CD8-positive, alpha-beta T cell (primary cell): ENCODE measurements at regions of chr2 and their contacts with region 1.

Region 1: DNA sequence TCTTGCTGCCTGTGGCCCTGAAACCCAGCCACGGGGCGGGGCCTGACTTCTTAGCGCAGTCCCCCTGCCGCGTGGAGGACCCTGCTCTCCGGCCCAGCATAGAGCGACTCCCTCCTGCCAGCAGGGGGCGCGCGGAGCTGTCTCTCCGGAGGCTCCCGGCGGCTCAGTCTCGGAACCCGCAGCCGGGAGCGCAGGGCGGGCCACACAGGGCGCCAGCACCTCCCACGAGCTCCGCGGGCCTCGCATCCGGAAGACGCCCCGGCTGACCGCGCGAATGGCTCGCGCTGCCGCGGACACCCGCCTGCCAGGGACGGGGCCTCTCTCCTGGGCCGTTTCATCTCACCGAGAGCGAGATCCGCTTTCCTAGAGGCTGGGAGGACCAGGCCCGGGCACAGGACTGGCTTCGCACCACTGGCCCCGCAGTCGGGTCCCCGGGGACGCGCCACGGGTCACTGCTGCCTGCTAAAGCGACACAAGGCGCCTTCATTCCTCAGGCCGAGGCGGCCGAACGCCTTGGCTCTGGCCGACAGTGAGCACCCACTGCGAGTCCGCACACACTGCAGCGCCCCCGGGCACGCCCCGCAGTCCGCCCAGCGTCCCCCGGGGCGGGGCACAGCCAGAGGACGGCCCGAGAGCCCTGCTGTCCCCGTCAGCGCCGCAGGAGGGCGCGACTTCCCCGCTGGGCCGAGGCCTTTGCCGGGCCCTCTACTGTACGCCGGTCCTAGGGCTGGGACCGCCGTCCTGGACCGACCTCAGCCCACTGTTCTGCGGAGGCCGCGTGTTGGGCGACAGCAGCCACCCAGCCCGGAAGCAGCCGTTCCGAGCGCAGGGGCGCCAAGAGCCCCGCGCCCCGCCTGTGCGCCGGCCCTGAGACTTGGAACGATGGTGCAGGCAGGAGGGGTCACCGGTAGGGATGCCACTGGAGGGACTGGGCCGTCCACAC is 39.0 kb upstream of the ARHGEF4 start:
- DNase-seq: peak; percentile 77 to 96 (median 92)
- ATAC-seq: peak; percentile 89
- H3K4me3 ChIP-seq: peak overlapping the region; percentile 69 to 96
- H3K4me3 Mint-ChIP-seq: peak overlapping the region; percentile 75
- H3K27ac ChIP-seq: peak overlapping the region; percentile 64 to 88
- H3K27ac Mint-ChIP-seq: peak overlapping the region; percentile 64
- H3K4me1 ChIP-seq: peaks cover 10% of the 10 kb centered on the region
- H3K4me1 Mint-ChIP-seq: peaks cover 6% of the 10 kb centered on the region
- H3K27me3 ChIP-seq: no peaks in the 10 kb centered on the region
- H3K27me3 Mint-ChIP-seq: peaks cover 2% of the 10 kb centered on the region
- CTCF ChIP-seq: peak; percentile 67

Region 2: GRCh38 chr2:130181325-130181879 is 616.4 kb before region 1 on chr2 and contains the start of gene SMPD4:
- CTCF ChIA-PET with region 1: no interaction called
- POLR2A ChIA-PET with region 1: no interaction called
- intact Hi-C with region 1: loop called in 1 of 2 experiments (anchors 5 kb)
- DNase-seq: peak; percentile 96 to 99 (median 98)
- ATAC-seq: peak; percentile 78
- H3K4me3 ChIP-seq: peak within 1 kb of the TSS; percentile 63 to 86
- H3K4me3 Mint-ChIP-seq: peak within 1 kb of the TSS; percentile 92
- H3K27ac ChIP-seq: peak within 1 kb of the TSS; percentile 81 to 89
- H3K27ac Mint-ChIP-seq: peak within 1 kb of the TSS; percentile 95
- H3K4me1 ChIP-seq: peaks cover 22% of the 10 kb centered on the region
- H3K4me1 Mint-ChIP-seq: peaks cover 27% of the 10 kb centered on the region
- H3K27me3 ChIP-seq: no peaks in the 10 kb centered on the region
- H3K27me3 Mint-ChIP-seq: no peaks in the 10 kb centered on the region
- CTCF ChIP-seq: no peak
- total RNA-seq, gene SMPD4: 108 to 114 TPM

Region 3: DNA sequence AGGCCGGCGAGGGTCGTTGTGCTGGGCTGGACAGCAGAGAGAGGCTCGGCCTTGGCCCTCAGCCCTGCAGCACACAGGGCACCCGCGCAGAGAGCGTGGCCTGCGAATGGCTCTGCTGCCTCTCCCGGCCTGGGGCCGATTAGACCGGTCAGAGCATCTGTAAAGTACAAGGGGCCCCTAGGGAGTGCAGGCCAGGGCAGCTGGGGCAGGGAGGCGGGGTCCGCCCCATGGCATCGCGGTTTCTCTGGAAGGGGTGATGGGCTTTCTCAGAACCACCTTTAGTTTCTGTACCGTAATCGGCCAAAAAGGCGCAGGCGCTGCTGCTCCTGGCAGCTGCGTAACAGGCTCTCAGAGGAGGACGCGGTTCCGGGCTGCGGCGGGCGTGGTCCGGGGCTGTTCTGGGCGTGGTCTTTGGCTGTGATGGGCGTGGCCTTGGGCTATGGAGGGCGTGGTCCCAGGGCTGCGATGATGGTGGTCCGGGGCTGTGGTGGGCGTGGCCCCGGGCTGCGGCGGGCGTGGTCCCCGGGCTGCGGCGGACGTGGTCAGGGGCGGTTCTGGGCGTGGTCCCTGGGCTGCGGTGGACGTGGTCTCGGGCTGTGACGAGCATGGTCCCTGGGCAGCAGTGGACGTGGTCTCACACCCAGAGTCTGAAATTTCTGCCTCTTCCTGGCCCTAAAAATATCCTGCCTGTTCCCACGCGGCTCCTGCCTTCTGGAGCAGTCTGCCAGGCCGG is 70.3 kb before region 1 on chr2:
- CTCF ChIA-PET with region 1: interaction called, 4 read pairs
- POLR2A ChIA-PET with region 1: no interaction called
- intact Hi-C with region 1: loop called in 1 of 2 experiments (anchors 2 kb)
- DNase-seq: peak; percentile 81 to 94 (median 89)
- ATAC-seq: peak; percentile 96
- H3K4me3 ChIP-seq: peak overlapping the region; percentile 72 to 81
- H3K4me3 Mint-ChIP-seq: peak overlapping the region; percentile 84
- H3K27ac ChIP-seq: peak overlapping the region; percentile 66 to 85
- H3K27ac Mint-ChIP-seq: peak overlapping the region; percentile 81
- H3K4me1 ChIP-seq: peaks cover 16% of the 10 kb centered on the region
- H3K4me1 Mint-ChIP-seq: peaks cover 15% of the 10 kb centered on the region
- H3K27me3 ChIP-seq: no peaks in the 10 kb centered on the region
- H3K27me3 Mint-ChIP-seq: no peaks in the 10 kb centered on the region
- CTCF ChIP-seq: no peak

Region 4: DNA sequence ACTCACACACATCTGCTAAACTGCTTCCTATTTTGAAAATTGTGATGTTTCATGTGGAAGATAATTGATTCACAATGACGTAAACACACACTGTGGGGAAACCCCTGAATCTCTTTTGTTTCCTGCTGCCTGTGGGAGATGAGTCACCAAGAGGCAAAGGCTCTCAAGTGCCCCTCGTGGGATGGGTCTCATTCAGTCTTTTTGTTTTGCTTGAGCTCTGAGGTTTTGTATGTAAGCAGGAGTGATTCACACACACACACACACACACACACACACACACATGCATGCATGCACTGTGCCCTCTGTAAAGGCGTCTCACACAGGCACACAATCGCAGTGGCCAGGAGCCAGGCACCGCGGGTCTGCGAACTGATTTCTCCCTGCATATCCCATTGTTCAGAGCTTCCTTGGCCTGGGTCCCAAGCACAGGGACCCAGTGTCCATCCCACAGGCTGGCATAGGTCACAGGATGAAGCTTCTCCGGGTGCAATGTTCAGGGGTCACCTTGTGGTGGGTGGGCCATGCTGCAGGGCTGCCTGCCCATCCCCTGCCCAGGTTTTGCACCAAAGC is 26.8 kb after region 1 on chr2:
- CTCF ChIA-PET with region 1: interaction called, 6 read pairs
- POLR2A ChIA-PET with region 1: no interaction called
- intact Hi-C with region 1: loop called (anchors 1 kb)
- DNase-seq: peak; percentile 35 to 90 (median 68)
- ATAC-seq: peak; percentile 90
- H3K4me3 ChIP-seq: no peak overlapping the region
- H3K4me3 Mint-ChIP-seq: no peak overlapping the region
- H3K27ac ChIP-seq: peak overlapping the region in 1 of 2 experiments; percentile 24
- H3K27ac Mint-ChIP-seq: peak overlapping the region; percentile 77
- H3K4me1 ChIP-seq: peaks cover 11% of the 10 kb centered on the region
- H3K4me1 Mint-ChIP-seq: peaks cover 13% of the 10 kb centered on the region
- H3K27me3 ChIP-seq: no peaks in the 10 kb centered on the region
- H3K27me3 Mint-ChIP-seq: peaks cover 2% of the 10 kb centered on the region
- CTCF ChIP-seq: no peak

Region 5: GRCh38 chr2:131040661-131041401 is 243.1 kb after region 1 on chr2:
- CTCF ChIA-PET with region 1: interaction called, 6 read pairs
- POLR2A ChIA-PET with region 1: no interaction called
- intact Hi-C with region 1: loop called (anchors 5 kb)
- DNase-seq: peak in 5 of 9 experiments; percentile 27 to 57 (median 40)
- ATAC-seq: peak; percentile 53
- H3K4me3 ChIP-seq: peak overlapping the region; percentile 67 to 68
- H3K4me3 Mint-ChIP-seq: peak overlapping the region; percentile 93
- H3K27ac ChIP-seq: peak overlapping the region; percentile 46 to 56
- H3K27ac Mint-ChIP-seq: peak overlapping the region; percentile 86
- H3K4me1 ChIP-seq: peaks cover 33% of the 10 kb centered on the region
- H3K4me1 Mint-ChIP-seq: peaks cover 56% of the 10 kb centered on the region
- H3K27me3 ChIP-seq: no peaks in the 10 kb centered on the region
- H3K27me3 Mint-ChIP-seq: no peaks in the 10 kb centered on the region
- CTCF ChIP-seq: no peak